Activated CD4-positive, alpha-beta T cell treated with anti-CD3 and anti-CD28 coated beads, Interleukin-2, amount 10 ng/mL, durations not matched to agents 24 days and 14 days (primary cell): ENCODE measurements at regions of chr7 and their contacts with region 1.

Region 1: DNA sequence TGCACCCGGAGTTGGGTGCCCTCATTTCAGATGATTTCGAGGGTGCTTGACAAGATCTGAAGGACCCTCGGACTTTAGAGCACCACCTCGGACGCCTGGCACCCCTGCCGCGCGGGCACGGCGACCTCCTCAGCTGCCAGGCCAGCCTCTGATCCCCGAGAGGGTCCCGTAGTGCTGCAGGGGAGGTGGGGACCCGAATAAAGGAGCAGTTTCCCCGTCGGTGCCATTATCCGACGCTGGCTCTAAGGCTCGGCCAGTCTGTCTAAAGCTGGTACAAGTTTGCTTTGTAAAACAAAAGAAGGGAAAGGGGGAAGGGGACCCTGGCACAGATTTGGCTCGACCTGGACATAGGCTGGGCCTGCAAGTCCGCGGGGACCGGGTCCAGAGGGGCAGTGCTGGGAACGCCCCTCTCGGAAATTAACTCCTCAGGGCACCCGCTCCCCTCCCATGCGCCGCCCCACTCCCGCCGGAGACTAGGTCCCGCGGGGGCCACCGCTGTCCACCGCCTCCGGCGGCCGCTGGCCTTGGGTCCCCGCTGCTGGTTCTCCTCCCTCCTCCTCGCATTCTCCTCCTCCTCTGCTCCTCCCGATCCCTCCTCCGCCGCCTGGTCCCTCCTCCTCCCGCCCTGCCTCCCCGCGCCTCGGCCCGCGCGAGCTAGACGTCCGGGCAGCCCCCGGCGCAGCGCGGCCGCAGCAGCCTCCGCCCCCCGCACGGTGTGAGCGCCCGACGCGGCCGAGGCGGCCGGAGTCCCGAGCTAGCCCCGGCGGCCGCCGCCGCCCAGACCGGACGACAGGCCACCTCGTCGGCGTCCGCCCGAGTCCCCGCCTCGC is at the start of gene EGFR:
- DNase-seq: no peak
- H3K4me3 Mint-ChIP-seq: peak within 1 kb of the TSS; percentile 46
- H3K27ac Mint-ChIP-seq: no peak within 1 kb of the TSS
- H3K4me1 Mint-ChIP-seq: no peaks in the 10 kb centered on the region
- H3K27me3 Mint-ChIP-seq: peaks cover 70% of the 10 kb centered on the region
- total RNA-seq, gene EGFR: not detected in 2 replicates

Region 2: DNA sequence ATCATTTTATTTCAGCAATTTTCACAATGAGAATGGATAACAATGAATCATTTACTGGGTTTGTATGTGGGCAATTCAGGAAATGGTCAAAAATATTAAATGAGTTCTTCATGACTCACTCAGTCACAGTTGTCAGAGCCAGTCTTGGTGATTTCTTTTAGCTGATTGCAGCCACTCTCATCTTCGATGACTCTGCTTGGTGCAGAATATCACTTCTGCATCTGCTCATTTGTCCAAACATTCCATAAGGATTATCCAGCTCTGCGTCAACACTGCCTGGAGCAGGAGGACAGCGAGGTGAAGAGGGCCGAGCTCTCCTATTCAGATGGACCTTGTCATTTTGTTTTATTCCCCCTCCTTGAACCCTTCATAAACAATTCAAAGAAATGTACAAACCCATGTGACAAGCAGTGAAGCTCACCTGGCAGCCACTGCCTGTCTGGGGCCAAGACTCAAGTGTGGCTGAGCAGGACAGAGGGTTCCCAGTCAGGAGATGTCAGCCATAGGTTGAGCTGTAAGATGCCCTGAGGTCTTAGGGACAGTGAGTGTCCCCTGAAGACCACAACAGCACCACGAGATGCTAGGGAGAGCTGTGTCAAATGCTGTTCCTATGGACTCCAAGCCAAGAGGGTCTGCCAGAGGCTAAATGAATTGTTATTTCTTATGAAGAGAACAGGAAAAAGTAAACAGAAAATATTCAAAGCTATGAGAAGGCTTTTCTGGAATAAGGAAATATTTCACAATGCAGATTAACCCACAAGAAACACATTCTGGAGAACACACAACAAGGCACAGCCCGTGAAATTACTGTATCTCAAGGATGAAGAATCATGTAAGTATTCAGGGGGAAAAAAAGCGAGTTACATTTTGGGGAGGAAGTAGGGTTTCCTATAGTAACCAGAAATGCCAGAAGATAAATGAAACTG is 32.9 kb before region 1 on chr7:
- intact Hi-C with region 1: loop called (anchors 2 kb)
- DNase-seq: no peak
- H3K4me3 Mint-ChIP-seq: no peak overlapping the region
- H3K27ac Mint-ChIP-seq: no peak overlapping the region
- H3K4me1 Mint-ChIP-seq: no peaks in the 10 kb centered on the region
- H3K27me3 Mint-ChIP-seq: peaks cover 20% of the 10 kb centered on the region